ENCODE measurements at regions of chr9 and their contacts with region 1.

Region 1: DNA sequence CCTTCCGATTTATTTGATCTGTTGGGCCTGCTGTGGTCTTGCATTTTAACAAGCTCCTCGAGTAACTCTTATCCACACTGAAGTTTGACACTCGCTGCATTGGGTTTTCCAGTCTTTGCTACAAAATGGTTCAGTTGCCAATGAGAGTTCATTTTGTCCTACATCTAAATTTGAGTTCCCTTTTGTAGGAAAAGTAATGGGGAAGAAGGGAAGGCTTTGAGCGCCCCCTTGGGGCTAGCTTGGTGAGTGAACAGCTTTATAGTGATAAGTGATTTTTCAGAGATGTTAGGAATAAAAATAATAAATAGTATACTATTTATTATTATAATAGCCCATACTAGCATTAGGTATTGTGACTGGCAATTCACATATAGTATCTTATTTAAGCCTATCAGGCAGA is 89.9 kb upstream of the GNAQ start:
- DNase-seq: peak; percentile 38 to 70 (median 48)
- ATAC-seq: no peak
- H3K4me3 ChIP-seq: no peak overlapping the region
- H3K27ac ChIP-seq: no peak overlapping the region
- H3K4me1 ChIP-seq: peaks cover 0 to 17% (median 0%) of the 10 kb centered on the region in 12 donors
- H3K27me3 ChIP-seq: no peaks in the 10 kb centered on the region
- CTCF ChIP-seq: peak; percentile 28 to 82 (median 56)
- POLR2A ChIP-seq: no peak

Region 2: DNA sequence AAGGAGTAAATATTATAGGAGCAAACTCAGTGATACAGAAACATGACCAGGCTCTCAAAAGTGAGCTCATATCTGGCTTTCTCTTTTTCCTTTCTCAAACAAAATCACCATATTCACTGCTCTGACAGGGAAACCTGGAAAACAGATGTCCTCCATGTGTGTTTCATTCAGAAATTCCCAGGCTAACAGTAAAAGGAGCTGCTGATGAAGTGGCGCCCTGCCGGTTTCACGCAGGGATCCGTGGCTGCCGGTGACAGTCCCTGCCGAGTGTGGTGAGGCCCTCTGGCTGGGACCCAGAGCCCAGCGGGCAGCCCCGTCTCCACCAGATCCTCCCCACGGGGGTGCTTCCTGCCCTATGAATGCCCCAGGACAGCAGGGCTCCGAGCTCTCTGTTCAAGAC is 681.4 kb before region 1 on chr9:
- intact Hi-C with region 1: loop called in 1 of 10 experiments (anchors 10 kb)
- DNase-seq: peak in 1 of 5 donors; percentile 58
- ATAC-seq: peak in 3 of 4 donors; percentile 33 to 59 (median 41)
- H3K4me3 ChIP-seq: peak overlapping the region in 1 of 12 donors; percentile 22
- H3K27ac ChIP-seq: peak overlapping the region in 4 of 12 donors; percentile 28 to 58 (median 50)
- H3K4me1 ChIP-seq: peaks cover 0 to 11% (median 0%) of the 10 kb centered on the region in 12 donors
- H3K27me3 ChIP-seq: no peaks in the 10 kb centered on the region
- CTCF ChIP-seq: no peak
- POLR2A ChIP-seq: no peak

Region 3: DNA sequence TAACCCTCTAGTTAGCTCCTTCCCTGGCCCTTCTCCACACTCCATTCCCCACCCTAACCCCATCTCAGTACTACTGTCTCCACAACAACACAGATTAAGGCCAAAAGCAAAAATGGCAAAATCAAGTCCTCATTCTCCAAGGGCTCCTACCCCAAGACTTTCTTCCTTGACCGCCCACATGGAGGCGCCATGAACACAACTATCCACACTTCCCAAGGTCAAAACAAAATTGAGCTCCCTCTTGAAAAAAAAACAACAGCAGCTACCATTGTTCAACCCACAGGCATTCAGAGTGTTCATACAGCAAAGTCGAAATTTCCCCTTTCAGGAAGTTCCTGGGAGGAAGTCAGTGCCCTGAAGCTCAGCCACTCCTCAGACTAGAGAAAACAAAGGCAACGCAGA is 144.3 kb before region 1 on chr9:
- intact Hi-C with region 1: loop called in 1 of 10 experiments (anchors 10 kb)
- DNase-seq: peak; percentile 55 to 71 (median 62)
- ATAC-seq: peak; percentile 67 to 91 (median 86)
- H3K4me3 ChIP-seq: peak overlapping the region in 2 of 12 donors; percentile 3 to 18
- H3K27ac ChIP-seq: peak overlapping the region in 11 of 12 donors; percentile 1 to 81 (median 51)
- H3K4me1 ChIP-seq: peaks cover 0 to 49% (median 25%) of the 10 kb centered on the region in 12 donors
- H3K27me3 ChIP-seq: no peaks in the 10 kb centered on the region
- CTCF ChIP-seq: peak; percentile 13 to 68 (median 58)
- POLR2A ChIP-seq: no peak

Measured in heart left ventricle (tissue), 16 donors.